Dorsolateral prefrontal cortex (tissue), 120 donors: ENCODE measurements at regions of chr21 and their contacts with region 1.

Region 1: DNA sequence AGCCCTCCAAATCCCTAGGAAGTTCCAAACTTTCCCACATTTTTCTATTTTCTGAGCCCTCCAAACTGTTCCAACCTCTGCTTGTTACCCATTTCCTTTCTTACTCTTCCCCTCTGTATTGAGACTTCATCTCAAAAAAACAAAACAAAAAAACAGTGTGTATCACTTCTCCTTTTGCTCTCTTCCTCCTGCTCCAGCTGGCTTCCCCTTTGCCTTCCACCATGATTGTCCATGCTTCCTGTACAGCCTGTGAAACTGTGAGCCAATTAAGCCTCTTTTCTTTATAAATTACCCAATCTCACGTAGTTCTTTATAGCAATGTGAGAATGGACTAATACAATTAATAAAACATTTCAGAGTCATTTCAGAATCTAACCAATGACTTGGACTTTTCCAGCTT is 69.6 kb upstream of the KRTAP19-8 start:
- DNase-seq: no peak
- H3K4me3 ChIP-seq: no peak overlapping the region
- H3K27ac ChIP-seq: peak overlapping the region in 18 of 59 donors; percentile 3 to 74 (median 42)
- H3K27me3 ChIP-seq: no peaks in the 10 kb centered on the region
- CTCF ChIP-seq: no peak

Region 2: GRCh38 chr21:31180256-31181081 is 72.6 kb after region 1 on chr21:
- intact Hi-C with region 1: loop called (anchors 2 to 5 kb)
- DNase-seq: no peak
- H3K4me3 ChIP-seq: no peak overlapping the region
- H3K27ac ChIP-seq: peak overlapping the region in 20 of 59 donors; percentile 0 to 65 (median 31)
- H3K27me3 ChIP-seq: no peaks in the 10 kb centered on the region
- CTCF ChIP-seq: peak; percentile 47 to 92 (median 76)

Region 3: DNA sequence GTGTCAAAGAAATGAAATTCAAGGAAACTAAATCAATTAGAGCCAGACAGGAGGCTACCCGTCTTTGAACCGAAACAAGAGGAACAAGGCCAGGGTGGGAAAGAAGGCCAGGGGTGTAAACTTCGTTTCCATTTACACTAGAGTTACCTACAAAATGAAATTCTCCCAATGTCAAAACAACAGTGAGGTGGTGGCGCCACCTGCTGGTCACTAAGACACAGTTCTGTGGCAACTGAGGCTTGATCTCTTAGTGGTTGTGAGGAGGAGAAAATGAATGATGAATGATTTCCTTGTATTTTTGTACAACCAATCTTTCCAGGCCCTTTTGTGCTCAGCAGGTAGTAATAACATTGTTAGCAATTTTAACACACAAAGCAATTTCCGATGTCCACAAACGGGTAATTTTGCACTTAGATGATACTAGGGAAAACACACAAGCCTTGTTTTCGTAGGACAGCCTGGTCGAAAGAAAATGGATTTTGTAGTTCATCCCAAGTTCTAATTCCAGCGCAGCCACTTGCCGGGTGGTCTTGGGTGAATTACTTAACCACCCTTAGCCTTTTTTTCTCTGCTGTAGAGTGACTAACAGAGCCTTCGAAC is 496.8 kb after region 1 on chr21:
- intact Hi-C with region 1: loop called (anchors 5 to 10 kb)
- DNase-seq: peak; percentile 60 to 81 (median 70)
- H3K4me3 ChIP-seq: no peak overlapping the region
- H3K27ac ChIP-seq: no peak overlapping the region
- H3K27me3 ChIP-seq: peaks cover 0 to 3% (median 0%) of the 10 kb centered on the region in 45 donors
- CTCF ChIP-seq: peak; percentile 87 to 100 (median 95)